GM12878 (cell line): ENCODE measurements at regions of chr3 and their contacts with region 1.

Region 1: DNA sequence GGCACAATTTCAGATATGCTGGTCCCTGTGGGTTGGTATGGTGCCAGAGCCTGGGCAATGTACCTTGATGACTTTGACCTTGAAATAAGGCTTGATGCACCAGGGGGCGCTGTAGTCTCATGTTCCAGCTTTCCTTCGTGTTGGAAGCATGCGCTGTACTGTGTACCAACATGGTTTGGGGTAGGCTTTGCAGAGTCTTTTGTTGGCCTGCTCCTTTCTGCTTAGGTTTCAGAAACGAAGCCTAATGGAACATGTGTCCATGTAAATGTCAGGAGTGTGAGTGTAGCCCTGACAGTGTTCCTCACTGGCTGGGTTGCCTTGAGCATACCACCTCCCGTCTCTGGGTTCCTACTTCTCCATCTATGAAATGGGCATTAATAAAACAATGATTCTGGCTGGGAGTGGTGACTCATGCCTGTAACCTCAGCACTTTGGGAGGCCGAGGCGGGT is 3.6 kb upstream of the CCR4 start:
- DNase-seq: peak; percentile 61
- ATAC-seq: peak; percentile 98
- H3K4me3 ChIP-seq: no peak overlapping the region
- H3K27ac ChIP-seq: no peak overlapping the region
- H3K4me1 ChIP-seq: peaks cover 7% of the 10 kb centered on the region; the same call in 1 of the 2 replicates
- H3K27me3 ChIP-seq: no peaks in the 10 kb centered on the region
- CTCF ChIP-seq: peak; percentile 81 to 95 (median 86)
- EP300 ChIP-seq: no peak
- POLR2A ChIP-seq: no peak
- RAD21 ChIP-seq: peak; percentile 99

Region 2: GRCh38 chr3:32992322-32992692 is 44.5 kb after region 1 on chr3:
- CTCF ChIA-PET with region 1: interaction called, 4 read pairs
- POLR2A ChIA-PET with region 1: interaction called, 3 read pairs
- RAD21 ChIA-PET with region 1: interaction called, 5 read pairs
- SMC1A ChIA-PET with region 1: interaction called, 4 read pairs
- in situ Hi-C with region 1: no loop called
- intact Hi-C with region 1: loop called (anchors 5 kb)
- DNase-seq: no peak
- ATAC-seq: peak; percentile 46
- H3K4me3 ChIP-seq: no peak overlapping the region
- H3K27ac ChIP-seq: peak overlapping the region; percentile 70
- H3K4me1 ChIP-seq: peaks cover 6% of the 10 kb centered on the region
- H3K27me3 ChIP-seq: no peaks in the 10 kb centered on the region
- CTCF ChIP-seq: no peak
- EP300 ChIP-seq: no peak
- POLR2A ChIP-seq: no peak
- RAD21 ChIP-seq: no peak

Region 3: GRCh38 chr3:33063651-33064051 is 115.8 kb after region 1 on chr3:
- CTCF ChIA-PET with region 1: interaction called, 182 read pairs
- POLR2A ChIA-PET with region 1: no interaction called
- RAD21 ChIA-PET with region 1: interaction called, 6 read pairs
- SMC1A ChIA-PET with region 1: interaction called, 4 read pairs
- in situ Hi-C with region 1: no loop called
- intact Hi-C with region 1: loop called (anchors 2 kb)
- DNase-seq: peak; percentile 42
- ATAC-seq: peak; percentile 76
- H3K4me3 ChIP-seq: no peak overlapping the region
- H3K27ac ChIP-seq: no peak overlapping the region
- H3K4me1 ChIP-seq: peaks cover 22% of the 10 kb centered on the region
- H3K27me3 ChIP-seq: no peaks in the 10 kb centered on the region
- CTCF ChIP-seq: no peak
- EP300 ChIP-seq: no peak
- POLR2A ChIP-seq: no peak
- RAD21 ChIP-seq: no peak

Region 4: GRCh38 chr3:33083958-33084357 is 136.1 kb after region 1 on chr3:
- CTCF ChIA-PET with region 1: interaction called, 5 read pairs
- POLR2A ChIA-PET with region 1: no interaction called
- RAD21 ChIA-PET with region 1: no interaction called
- SMC1A ChIA-PET with region 1: interaction called, 4 read pairs
- in situ Hi-C with region 1: loop called (anchors 5 kb)
- intact Hi-C with region 1: no loop called
- DNase-seq: no peak
- ATAC-seq: peak; percentile 58; the same call in 2 of the 3 replicates
- H3K4me3 ChIP-seq: no peak overlapping the region
- H3K27ac ChIP-seq: no peak overlapping the region
- H3K4me1 ChIP-seq: peaks cover 7% of the 10 kb centered on the region; the same call in 1 of the 2 replicates
- H3K27me3 ChIP-seq: no peaks in the 10 kb centered on the region
- CTCF ChIP-seq: no peak
- EP300 ChIP-seq: no peak
- POLR2A ChIP-seq: no peak
- RAD21 ChIP-seq: no peak

Region 5: GRCh38 chr3:33250712-33251111 is 302.9 kb after region 1 on chr3:
- CTCF ChIA-PET with region 1: interaction called, 3 read pairs
- POLR2A ChIA-PET with region 1: no interaction called
- RAD21 ChIA-PET with region 1: no interaction called
- SMC1A ChIA-PET with region 1: no interaction called
- in situ Hi-C with region 1: no loop called
- intact Hi-C with region 1: loop called (anchors 2 kb)
- DNase-seq: no peak
- ATAC-seq: no peak
- H3K4me3 ChIP-seq: no peak overlapping the region
- H3K27ac ChIP-seq: no peak overlapping the region
- H3K4me1 ChIP-seq: no peaks in the 10 kb centered on the region
- H3K27me3 ChIP-seq: no peaks in the 10 kb centered on the region
- CTCF ChIP-seq: no peak
- EP300 ChIP-seq: no peak
- POLR2A ChIP-seq: no peak
- RAD21 ChIP-seq: no peak